Esophagus muscularis mucosa (tissue), 4 donors: ENCODE measurements at regions of chr19 and their contacts with region 1.

Region 1: GRCh38 chr19:1113033-1113985 is 9.5 kb downstream of the GPX4 start:
- DNase-seq: peak; percentile 98
- H3K4me3 ChIP-seq: peak overlapping the region in 3 of 4 donors; percentile 16 to 30 (median 24)
- H3K27ac ChIP-seq: peak overlapping the region; percentile 76 to 83 (median 77)
- H3K4me1 ChIP-seq: peaks cover 21 to 38% (median 31%) of the 10 kb centered on the region in 4 donors
- H3K27me3 ChIP-seq: no peaks in the 10 kb centered on the region
- CTCF ChIP-seq: peak; percentile 95 to 99 (median 97)
- EP300 ChIP-seq: no peak
- POLR2A ChIP-seq: no peak

Region 2: GRCh38 chr19:1039646-1040475 is 73.4 kb before region 1 on chr19 and contains the start of gene ABCA7:
- intact Hi-C with region 1: no loop called
- DNase-seq: peak; percentile 98
- H3K4me3 ChIP-seq: peak within 1 kb of the TSS; percentile 56 to 61 (median 58)
- H3K27ac ChIP-seq: peak within 1 kb of the TSS; percentile 49 to 71 (median 54)
- H3K4me1 ChIP-seq: peaks cover 23 to 47% (median 34%) of the 10 kb centered on the region in 4 donors
- H3K27me3 ChIP-seq: peaks cover 0 to 11% (median 0%) of the 10 kb centered on the region in 4 donors
- CTCF ChIP-seq: peak in 1 of 3 experiments; percentile 31
- EP300 ChIP-seq: no peak
- POLR2A ChIP-seq: no peak
- total RNA-seq, gene ABCA7: 3.9 to 9.5 (median 6.9) TPM

Region 3: DNA sequence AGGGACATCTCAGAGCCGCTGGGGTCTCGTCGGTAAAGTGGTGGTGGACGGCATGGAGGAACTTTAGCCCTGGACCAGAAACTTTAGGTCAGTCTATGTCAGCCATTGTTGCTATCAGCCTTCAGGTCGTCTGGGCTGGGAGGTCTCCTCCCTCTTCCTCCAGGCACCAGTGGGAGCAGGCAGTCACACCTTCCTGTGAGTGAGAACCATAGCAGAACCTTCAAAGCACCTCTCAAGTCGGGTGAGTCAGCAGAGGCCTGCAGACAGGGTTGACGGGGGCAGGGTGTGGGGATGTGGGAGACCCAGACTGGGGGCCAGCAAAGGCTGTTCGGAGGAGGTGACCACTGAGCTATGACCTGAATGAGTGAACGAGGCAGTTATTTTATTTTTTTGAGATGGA is 76.1 kb after region 1 on chr19:
- intact Hi-C with region 1: loop called (anchors 5 kb)
- DNase-seq: no peak
- H3K4me3 ChIP-seq: no peak overlapping the region
- H3K27ac ChIP-seq: no peak overlapping the region
- H3K4me1 ChIP-seq: peaks cover 0 to 4% (median 4%) of the 10 kb centered on the region in 4 donors
- H3K27me3 ChIP-seq: no peaks in the 10 kb centered on the region
- CTCF ChIP-seq: no peak
- EP300 ChIP-seq: no peak
- POLR2A ChIP-seq: no peak